GM10248 (cell line): ENCODE measurements at regions of chr3 and their contacts with region 1.

Region 1: GRCh38 chr3:186413615-186414415 is 51.8 kb upstream of the DGKG start:
- DNase-seq: peak; percentile 41
- CTCF ChIP-seq: no peak

Region 2: DNA sequence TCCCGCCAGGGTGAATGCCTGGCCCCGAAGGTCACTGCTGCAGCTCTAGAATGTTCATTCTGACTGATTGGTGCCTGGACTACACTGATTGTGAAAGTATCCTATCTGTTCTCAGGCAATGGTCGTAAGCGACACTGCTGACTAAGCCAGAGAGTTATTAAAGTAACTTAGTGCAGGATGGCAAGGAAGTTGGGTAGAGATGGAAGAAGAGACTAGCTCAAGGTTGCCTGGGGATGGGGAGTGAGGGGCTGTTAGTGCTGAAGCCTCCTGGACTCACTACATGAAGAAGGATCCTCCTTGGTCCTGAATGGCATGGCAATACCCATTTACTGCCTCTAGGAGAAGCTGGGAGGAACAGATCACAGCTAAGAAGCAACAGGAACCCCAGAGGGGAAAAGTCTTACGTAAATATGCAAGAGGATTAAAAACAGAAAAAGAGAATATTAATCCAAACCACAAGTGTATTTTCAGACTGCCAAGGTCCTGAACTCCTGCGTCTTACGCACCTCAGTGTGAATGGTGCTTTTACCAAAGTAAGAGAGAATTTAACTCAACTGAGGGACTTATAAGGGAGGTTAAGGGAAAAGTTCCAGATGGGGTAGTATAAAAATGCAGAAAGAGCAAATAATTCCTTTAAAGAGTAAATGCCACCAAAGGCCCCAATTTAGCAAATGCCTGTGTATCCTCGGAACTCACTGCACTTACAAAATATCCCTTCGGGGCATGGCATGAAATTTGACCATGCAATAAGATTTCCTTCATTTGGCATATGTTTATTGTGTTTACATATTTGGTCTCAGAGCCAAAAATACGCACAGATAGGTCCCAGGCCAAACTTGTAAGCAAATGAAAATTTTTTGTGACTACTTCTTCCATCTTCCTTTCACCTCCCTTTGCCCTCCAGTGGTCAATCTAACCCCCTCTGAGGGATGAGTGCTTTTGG is 12.2 kb after region 1 on chr3:
- CTCF ChIA-PET with region 1: interaction called, 15 read pairs
- POLR2A ChIA-PET with region 1: no interaction called
- DNase-seq: no peak
- CTCF ChIP-seq: no peak